Heart right ventricle (tissue), 16 donors: ENCODE measurements at regions of chr19 and their contacts with region 1.

Region 1: GRCh38 chr19:27657271-27658051 is 1555.5 kb downstream of the UQCRFS1 start:
- DNase-seq: no peak
- ATAC-seq: no peak
- H3K4me3 ChIP-seq: no peak overlapping the region
- H3K27ac ChIP-seq: no peak overlapping the region
- H3K4me1 ChIP-seq: peaks cover 0 to 22% (median 4%) of the 10 kb centered on the region in 9 donors
- H3K27me3 ChIP-seq: no peaks in the 10 kb centered on the region
- CTCF ChIP-seq: no peak

Region 2: GRCh38 chr19:27676877-27677276 is 19.4 kb after region 1 on chr19:
- intact Hi-C with region 1: no loop called
- DNase-seq: peak in 1 of 2 donors; percentile 53
- ATAC-seq: peak; percentile 75 to 93 (median 88)
- H3K4me3 ChIP-seq: no peak overlapping the region
- H3K27ac ChIP-seq: peak overlapping the region in 6 of 10 donors; percentile 55 to 86 (median 76)
- H3K4me1 ChIP-seq: peaks cover 0 to 63% (median 26%) of the 10 kb centered on the region in 9 donors
- H3K27me3 ChIP-seq: no peaks in the 10 kb centered on the region
- CTCF ChIP-seq: no peak

Region 3: GRCh38 chr19:27738569-27739193 is 81.2 kb after region 1 on chr19:
- intact Hi-C with region 1: loop called in 1 of 10 experiments (anchors 10 kb)
- DNase-seq: no peak
- ATAC-seq: no peak
- H3K4me3 ChIP-seq: no peak overlapping the region
- H3K27ac ChIP-seq: no peak overlapping the region
- H3K4me1 ChIP-seq: peaks cover 0 to 21% (median 0%) of the 10 kb centered on the region in 9 donors
- H3K27me3 ChIP-seq: no peaks in the 10 kb centered on the region
- CTCF ChIP-seq: no peak